Colonic mucosa (tissue), 4 donors: ENCODE measurements at regions of chr15 and their contacts with region 1.

Region 1: DNA sequence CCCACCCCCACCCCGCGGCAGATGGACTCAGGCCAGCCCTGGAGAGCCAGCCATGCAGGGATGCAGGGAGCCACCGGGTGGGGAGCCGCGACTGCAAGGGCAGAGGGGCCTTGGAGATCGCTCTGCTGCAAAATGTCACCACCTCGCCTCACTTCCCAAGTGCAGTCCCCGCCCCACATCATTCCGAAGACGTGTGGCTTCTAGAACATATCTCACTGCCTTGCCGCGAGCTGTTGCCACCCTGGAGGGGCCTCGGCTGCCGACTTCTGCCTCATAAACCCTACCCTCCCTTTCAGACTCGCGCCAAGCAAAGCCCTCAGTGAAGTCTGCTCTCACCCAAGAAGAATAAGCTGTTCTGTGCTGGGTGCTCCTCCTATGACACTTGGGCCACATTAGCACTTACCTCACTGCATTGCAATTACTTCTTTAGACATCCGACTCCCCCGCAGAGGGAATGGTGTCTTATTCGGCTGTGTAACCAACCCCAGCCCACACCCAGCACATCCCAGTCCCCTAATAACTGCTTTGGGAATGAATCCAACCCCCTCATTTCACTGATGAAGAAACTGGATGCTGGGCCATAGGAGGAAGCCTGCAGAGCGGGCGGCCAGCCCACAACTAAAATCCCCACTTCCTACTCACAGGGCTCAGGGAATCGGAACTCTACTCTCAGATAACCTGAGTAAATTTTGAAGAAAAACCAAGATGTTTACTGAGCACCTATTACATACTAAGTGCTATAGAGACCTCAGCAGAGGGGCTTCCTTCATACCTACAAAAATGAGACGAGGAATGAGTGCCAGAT is 8.6 kb downstream of the TLE3 start:
- DNase-seq: peak; percentile 35
- H3K4me3 ChIP-seq: no peak overlapping the region
- H3K27ac ChIP-seq: no peak overlapping the region
- H3K4me1 ChIP-seq: peaks cover 34% of the 10 kb centered on the region
- H3K27me3 ChIP-seq: no peaks in the 10 kb centered on the region
- CTCF ChIP-seq: no peak

Region 2: DNA sequence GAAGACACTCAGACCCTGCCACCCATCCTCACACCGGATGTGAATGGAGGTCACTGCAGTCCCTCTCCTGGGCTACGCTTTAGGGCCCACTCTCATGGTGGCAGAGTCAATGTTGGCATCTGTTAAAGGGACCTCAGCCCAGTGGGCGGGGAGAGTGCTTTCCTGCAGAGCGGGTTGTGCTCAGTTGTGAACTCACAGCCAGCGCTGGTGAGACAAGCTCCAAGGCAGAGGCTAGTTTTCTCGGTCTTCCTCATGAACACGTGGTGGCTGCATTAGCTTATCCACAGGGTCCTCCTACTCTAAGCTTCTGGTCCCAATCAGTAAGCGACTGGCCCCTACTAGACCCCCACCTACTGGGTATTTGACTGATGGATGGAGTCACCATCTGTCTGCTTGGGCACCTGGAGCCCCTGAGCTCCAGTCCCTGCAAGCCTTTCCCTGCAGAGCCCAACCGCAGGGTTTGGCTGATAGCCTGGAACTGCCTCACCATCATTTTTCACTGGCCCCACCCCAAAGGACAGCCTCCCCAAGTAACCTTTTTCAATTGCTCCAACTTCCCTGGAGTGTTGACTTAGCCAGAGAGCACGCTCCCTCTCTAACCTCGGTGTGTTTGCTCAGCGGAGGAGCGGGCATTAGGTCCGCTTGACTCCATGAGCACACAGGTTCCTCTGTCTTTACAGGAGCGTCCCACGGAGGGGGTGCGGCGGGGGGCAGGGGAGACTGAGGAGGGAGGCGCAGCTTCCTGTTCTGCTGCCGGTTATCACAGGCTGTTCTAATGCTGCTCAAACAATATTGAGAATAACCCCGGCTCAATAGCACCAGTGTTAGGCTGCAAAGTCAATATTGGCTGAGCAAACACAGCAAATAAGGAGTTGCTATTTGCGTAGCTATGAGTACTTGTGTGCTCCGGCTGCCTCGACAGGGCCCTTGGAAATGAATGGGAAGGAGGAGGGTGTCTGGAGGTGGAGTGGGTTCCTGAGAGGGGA is 494.8 kb before region 1 on chr15:
- intact Hi-C with region 1: loop called (anchors 10 kb)
- DNase-seq: peak; percentile 95
- H3K4me3 ChIP-seq: no peak overlapping the region
- H3K27ac ChIP-seq: peak overlapping the region; percentile 26
- H3K4me1 ChIP-seq: peaks cover 21% of the 10 kb centered on the region
- H3K27me3 ChIP-seq: peaks cover 5% of the 10 kb centered on the region
- CTCF ChIP-seq: no peak

Region 3: DNA sequence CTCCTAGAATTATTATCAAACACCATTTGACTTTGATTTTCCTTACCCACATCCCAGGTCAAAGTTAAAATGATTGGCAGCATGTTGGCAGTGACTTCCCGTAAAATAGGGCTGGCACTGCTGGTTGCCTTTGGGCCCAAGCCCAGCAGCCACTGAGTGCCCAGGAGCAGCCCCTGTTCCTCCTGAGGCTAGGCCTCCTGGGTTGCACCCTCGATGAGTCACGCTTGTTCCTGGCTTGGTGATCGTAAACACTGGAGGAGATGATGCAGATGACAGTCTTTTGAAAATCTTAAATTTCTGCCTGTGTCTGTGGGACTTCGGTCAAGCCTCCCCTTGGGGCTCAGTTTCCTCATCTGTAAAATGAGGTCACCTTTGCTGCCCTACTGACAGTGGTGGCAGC is 281.3 kb before region 1 on chr15:
- intact Hi-C with region 1: no loop called
- DNase-seq: no peak
- H3K4me3 ChIP-seq: no peak overlapping the region
- H3K27ac ChIP-seq: no peak overlapping the region
- H3K4me1 ChIP-seq: no peaks in the 10 kb centered on the region
- H3K27me3 ChIP-seq: no peaks in the 10 kb centered on the region
- CTCF ChIP-seq: no peak